GM12878 (cell line): ENCODE measurements at regions of chr5 and their contacts with region 1.

Region 1: DNA sequence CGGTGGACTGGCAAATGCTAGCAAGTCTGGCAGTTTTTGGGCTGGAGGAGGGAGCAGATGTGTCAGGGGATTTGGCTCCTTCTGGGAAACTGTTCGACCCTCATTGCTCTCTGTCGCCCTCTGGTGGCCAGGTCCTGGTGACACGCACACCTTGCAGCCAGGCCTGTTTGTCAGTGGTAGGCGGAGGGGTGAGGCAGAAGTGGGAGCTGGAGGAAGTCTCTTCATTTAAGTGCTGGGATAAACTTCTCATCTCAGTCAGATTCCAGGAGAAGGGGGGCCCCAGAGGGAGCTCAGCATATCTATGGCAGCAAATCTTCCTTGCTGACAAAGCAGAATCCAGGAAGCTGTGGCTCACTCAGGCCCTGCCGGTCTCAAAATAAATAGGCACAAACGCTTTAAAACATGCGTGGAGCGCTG is 326.5 kb downstream of the ZSWIM6 start:
- DNase-seq: peak; percentile 21
- ATAC-seq: peak; percentile 97
- H3K4me3 ChIP-seq: no peak overlapping the region
- H3K27ac ChIP-seq: no peak overlapping the region
- H3K4me1 ChIP-seq: no peaks in the 10 kb centered on the region
- H3K27me3 ChIP-seq: no peaks in the 10 kb centered on the region; a peak in 3 of 4 replicates
- CTCF ChIP-seq: peak; percentile 88 to 95 (median 93)
- EP300 ChIP-seq: no peak
- POLR2A ChIP-seq: no peak
- RAD21 ChIP-seq: peak; percentile 89

Region 2: DNA sequence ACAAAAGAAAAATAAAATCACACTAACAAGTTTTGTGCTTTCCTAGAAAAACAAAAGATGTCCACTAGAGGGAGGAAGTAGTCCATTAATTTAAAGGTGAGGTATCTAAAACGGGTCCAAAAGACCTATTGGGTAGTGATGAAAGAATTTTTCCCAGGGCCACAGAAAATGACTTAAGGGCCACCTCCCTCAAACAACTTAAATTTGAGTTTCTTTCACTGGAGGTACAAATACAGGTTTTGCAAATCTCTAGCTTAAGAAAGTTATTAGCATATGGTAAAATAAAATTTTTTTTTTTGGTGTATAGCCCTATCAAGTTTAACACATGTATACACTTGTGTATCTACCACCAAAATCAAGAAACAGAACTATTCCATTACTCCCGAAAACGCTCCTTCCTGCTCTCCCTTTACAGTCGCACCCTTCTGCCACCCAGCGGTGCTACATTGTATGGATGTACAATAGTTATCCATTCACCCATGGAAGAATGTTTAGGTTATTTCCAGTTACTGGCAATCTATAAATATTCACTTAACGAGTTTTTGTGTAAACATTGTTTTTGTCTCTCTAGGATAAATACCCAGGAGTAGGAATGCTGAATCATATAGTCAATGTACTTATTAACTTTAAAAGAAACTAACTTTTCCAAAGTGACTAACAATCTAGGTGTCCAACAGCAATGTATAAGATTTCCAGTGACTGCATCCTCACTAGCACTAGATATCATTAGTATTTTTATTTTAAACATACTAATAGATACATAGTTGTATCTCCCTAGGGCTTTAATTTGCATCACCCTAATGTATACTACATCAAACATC is 980.5 kb before region 1 on chr5:
- CTCF ChIA-PET with region 1: interaction called, 5 read pairs
- POLR2A ChIA-PET with region 1: no interaction called
- RAD21 ChIA-PET with region 1: interaction called, 4 read pairs
- SMC1A ChIA-PET with region 1: no interaction called
- in situ Hi-C with region 1: no loop called
- intact Hi-C with region 1: loop called (anchors 10 kb)
- DNase-seq: peak; percentile 20
- ATAC-seq: peak; percentile 88
- H3K4me3 ChIP-seq: no peak overlapping the region
- H3K27ac ChIP-seq: no peak overlapping the region
- H3K4me1 ChIP-seq: no peaks in the 10 kb centered on the region
- H3K27me3 ChIP-seq: no peaks in the 10 kb centered on the region
- CTCF ChIP-seq: peak; percentile 35 to 61 (median 59); a peak in 5 of 6 replicates
- EP300 ChIP-seq: no peak
- POLR2A ChIP-seq: no peak
- RAD21 ChIP-seq: peak; percentile 72

Region 3: DNA sequence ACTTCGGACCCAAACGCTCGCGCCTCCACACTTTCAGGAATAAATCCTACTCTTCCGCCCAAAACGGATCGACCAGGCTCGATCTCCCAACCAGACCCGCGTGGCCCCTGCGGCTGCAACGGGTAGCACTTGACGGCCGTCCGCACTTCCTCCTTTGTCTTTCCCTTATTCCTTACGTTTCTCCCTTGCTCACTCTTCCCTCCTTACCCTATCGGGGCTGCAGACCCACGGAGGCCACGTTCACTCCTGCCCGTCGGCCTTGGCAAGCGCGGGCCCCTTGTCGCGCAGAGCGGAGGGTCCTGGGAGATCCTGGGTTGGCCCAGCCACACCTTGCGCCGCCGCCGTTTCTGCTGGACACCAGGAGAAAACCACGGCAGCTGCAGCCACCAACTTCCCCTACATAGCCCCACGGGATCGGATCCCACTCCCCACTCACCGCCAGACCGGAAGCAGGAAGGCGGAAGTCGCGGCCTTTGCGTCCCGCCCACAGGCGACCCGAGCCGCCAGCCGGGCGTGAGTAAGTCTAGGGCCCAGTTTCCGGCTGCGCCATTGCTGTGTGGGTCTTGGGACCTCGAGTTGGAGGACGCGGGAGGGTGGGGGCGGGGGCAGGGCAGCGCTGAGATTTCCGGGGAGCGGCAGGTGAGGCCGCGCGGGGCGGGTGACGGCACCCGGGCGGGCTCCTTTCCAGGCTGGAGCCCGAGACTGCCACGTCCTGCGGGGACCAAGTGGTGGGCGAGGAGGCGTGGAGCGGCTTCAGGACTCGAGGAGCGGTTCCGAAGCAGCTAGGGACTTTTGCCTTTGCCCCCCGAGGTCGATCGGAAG is 496.4 kb before region 1 on chr5 and contains the start of gene SMIM15:
- CTCF ChIA-PET with region 1: interaction called, 11 read pairs
- POLR2A ChIA-PET with region 1: no interaction called
- RAD21 ChIA-PET with region 1: no interaction called
- SMC1A ChIA-PET with region 1: interaction called, 8 read pairs
- in situ Hi-C with region 1: no loop called
- intact Hi-C with region 1: loop called (anchors 2 kb)
- DNase-seq: peak; percentile 54
- ATAC-seq: peak; percentile 94
- H3K4me3 ChIP-seq: peak within 1 kb of the TSS; percentile 73
- H3K27ac ChIP-seq: peak within 1 kb of the TSS; percentile 98
- H3K4me1 ChIP-seq: no peaks in the 10 kb centered on the region; the same call in 1 of the 2 replicates
- H3K27me3 ChIP-seq: no peaks in the 10 kb centered on the region
- CTCF ChIP-seq: no peak
- EP300 ChIP-seq: no peak
- POLR2A ChIP-seq: peak; percentile 99
- RAD21 ChIP-seq: no peak
- polyA plus RNA-seq, gene SMIM15: 13.8 to 18.7 TPM

Region 4: GRCh38 chr5:61362796-61363368 is 295.7 kb before region 1 on chr5:
- CTCF ChIA-PET with region 1: interaction called, 12 read pairs
- POLR2A ChIA-PET with region 1: no interaction called
- RAD21 ChIA-PET with region 1: no interaction called
- SMC1A ChIA-PET with region 1: interaction called, 3 read pairs
- in situ Hi-C with region 1: no loop called
- intact Hi-C with region 1: loop called (anchors 10 kb)
- DNase-seq: no peak
- ATAC-seq: peak; percentile 70
- H3K4me3 ChIP-seq: no peak overlapping the region
- H3K27ac ChIP-seq: no peak overlapping the region
- H3K4me1 ChIP-seq: no peaks in the 10 kb centered on the region
- H3K27me3 ChIP-seq: no peaks in the 10 kb centered on the region
- CTCF ChIP-seq: peak in 2 of 3 experiments; percentile 17 to 22; a peak in 1 of 6 replicates
- EP300 ChIP-seq: no peak
- POLR2A ChIP-seq: no peak
- RAD21 ChIP-seq: peak; percentile 33; the same call in 1 of the 2 replicates

Region 5: GRCh38 chr5:61647672-61648071 is 10.9 kb before region 1 on chr5:
- CTCF ChIA-PET with region 1: interaction called, 11 read pairs
- POLR2A ChIA-PET with region 1: no interaction called
- RAD21 ChIA-PET with region 1: no interaction called
- SMC1A ChIA-PET with region 1: interaction called, 10 read pairs
- in situ Hi-C with region 1: no loop called
- intact Hi-C with region 1: no loop called
- DNase-seq: no peak
- ATAC-seq: no peak
- H3K4me3 ChIP-seq: no peak overlapping the region
- H3K27ac ChIP-seq: no peak overlapping the region
- H3K4me1 ChIP-seq: no peaks in the 10 kb centered on the region
- H3K27me3 ChIP-seq: peaks cover 0 to 7% of the 10 kb centered on the region in 2 experiments; a peak in 3 of 4 replicates
- CTCF ChIP-seq: no peak
- EP300 ChIP-seq: no peak
- POLR2A ChIP-seq: no peak
- RAD21 ChIP-seq: no peak

Region 6: DNA sequence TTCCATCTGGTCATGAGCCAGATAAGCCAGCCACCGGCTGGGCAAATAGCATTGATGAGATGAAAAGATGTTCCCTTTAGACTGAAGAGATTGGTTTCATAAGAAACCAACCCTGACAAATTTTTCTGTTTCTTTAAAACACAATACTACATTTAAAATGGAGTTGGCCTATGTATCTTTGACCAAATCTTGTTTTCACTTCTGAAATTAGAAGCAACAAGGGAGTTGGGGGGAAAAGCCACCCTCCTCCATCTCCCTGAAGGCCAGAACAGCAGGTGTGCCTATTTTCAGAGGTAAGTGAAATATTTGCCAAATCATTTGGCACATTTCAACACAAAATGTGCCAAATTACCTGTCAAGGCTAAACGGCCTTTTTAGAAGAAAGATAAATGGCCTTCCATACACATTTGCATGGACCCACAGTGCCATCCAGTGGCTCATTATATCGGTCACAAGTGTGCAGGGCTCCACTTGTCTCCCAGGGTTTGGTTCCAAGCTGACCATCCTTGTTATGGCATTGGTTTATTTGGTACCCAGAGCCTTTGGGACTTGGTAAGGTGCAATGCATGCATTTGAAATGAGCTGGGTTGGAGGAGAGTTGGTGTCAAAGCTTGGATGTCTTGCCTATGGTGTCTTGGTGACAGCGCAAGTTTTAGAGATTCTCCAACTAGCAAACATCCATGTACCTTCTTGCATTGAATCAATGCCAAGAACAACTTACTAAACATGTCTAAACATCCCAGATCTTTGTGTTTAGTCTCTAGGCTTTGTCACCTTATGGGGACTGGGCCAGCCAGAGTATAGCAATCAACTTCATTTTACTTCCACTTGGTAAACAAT is 275.4 kb after region 1 on chr5:
- CTCF ChIA-PET with region 1: no interaction called
- POLR2A ChIA-PET with region 1: no interaction called
- RAD21 ChIA-PET with region 1: no interaction called
- SMC1A ChIA-PET with region 1: no interaction called
- in situ Hi-C with region 1: no loop called
- intact Hi-C with region 1: loop called (anchors 10 kb)
- DNase-seq: peak; percentile 7
- ATAC-seq: peak; percentile 83
- H3K4me3 ChIP-seq: no peak overlapping the region
- H3K27ac ChIP-seq: no peak overlapping the region
- H3K4me1 ChIP-seq: no peaks in the 10 kb centered on the region
- H3K27me3 ChIP-seq: no peaks in the 10 kb centered on the region
- CTCF ChIP-seq: peak; percentile 43 to 54 (median 52); a peak in 4 of 6 replicates
- EP300 ChIP-seq: no peak
- POLR2A ChIP-seq: no peak
- RAD21 ChIP-seq: peak; percentile 70